Mammary epithelial cell (primary cell): ENCODE measurements at regions of chr3 and their contacts with region 1.

Region 1: GRCh38 chr3:66038726-66039589 is at the start of gene MAGI1:
- DNase-seq: peak; percentile 93
- H3K4me3 ChIP-seq: peak within 1 kb of the TSS; percentile 85 to 93 (median 86)
- H3K27ac ChIP-seq: peak within 1 kb of the TSS; percentile 75
- H3K4me1 ChIP-seq: peaks cover 29% of the 10 kb centered on the region
- H3K27me3 ChIP-seq: no peaks in the 10 kb centered on the region
- CTCF ChIP-seq: no peak
- total RNA-seq, gene MAGI1: 16.1 to 30.5 TPM

Region 2: DNA sequence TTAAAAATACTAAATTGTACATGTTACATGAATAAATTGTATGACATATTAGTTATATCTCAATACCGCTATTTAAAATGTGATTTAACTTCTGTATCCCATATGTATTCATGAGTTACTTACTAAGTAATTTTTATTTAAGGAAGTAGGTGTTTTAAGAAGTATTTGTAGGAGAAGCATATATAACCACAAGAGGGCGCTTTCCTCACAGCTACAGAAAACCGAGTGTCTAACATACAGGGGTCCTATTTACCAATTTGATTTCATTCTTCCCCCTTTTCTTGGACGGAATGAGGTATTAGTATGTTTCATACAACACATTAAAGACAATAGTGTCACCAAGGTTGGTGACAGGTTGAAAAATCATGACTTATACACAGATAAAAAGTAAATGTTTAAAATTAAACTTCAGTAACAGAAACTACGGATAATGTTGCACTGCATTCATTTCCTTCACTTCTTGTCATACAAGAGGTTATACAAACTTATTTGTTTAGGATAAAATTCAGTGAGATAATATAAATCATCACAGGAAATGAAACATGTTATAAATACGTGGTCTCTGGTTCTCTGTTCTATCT is 253.8 kb before region 1 on chr3:
- CTCF ChIA-PET with region 1: no interaction called
- dilution Hi-C with region 1: no loop called
- in situ Hi-C with region 1: no loop called
- intact Hi-C with region 1: loop called (anchors 2 kb)
- DNase-seq: peak; percentile 9
- H3K4me3 ChIP-seq: no peak overlapping the region
- H3K27ac ChIP-seq: no peak overlapping the region
- H3K4me1 ChIP-seq: no peaks in the 10 kb centered on the region
- H3K27me3 ChIP-seq: no peaks in the 10 kb centered on the region
- CTCF ChIP-seq: peak; percentile 57 to 69

Region 3: DNA sequence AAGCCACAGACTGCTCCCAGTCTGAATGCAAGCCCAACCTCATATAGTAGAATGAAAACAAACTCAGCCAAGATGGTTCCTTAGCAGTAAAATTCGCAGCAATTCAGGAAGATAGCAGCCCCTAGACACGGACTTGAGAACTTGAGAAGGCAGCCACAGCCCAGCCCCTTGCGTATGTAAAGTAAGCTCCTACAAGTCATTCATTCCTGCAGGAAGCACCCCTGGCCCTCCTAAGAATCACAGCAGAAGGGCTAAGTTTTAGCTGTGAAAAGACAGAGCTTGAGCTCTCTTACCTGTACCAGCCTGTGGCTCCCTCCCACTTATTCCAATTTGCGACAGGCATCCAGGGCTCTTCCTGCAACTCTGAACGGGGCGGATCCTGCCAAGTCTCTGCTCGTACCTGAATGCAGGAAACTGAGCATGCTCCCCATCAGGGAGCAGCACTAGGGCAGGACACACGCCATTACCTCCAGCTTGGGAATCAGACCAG is 136.6 kb before region 1 on chr3:
- CTCF ChIA-PET with region 1: no interaction called
- dilution Hi-C with region 1: no loop called
- in situ Hi-C with region 1: no loop called
- intact Hi-C with region 1: loop called (anchors 2 kb)
- DNase-seq: peak; percentile 80
- H3K4me3 ChIP-seq: peak overlapping the region; percentile 49 to 56 (median 56)
- H3K27ac ChIP-seq: peak overlapping the region; percentile 73
- H3K4me1 ChIP-seq: peaks cover 11% of the 10 kb centered on the region
- H3K27me3 ChIP-seq: no peaks in the 10 kb centered on the region
- CTCF ChIP-seq: no peak

Region 4: DNA sequence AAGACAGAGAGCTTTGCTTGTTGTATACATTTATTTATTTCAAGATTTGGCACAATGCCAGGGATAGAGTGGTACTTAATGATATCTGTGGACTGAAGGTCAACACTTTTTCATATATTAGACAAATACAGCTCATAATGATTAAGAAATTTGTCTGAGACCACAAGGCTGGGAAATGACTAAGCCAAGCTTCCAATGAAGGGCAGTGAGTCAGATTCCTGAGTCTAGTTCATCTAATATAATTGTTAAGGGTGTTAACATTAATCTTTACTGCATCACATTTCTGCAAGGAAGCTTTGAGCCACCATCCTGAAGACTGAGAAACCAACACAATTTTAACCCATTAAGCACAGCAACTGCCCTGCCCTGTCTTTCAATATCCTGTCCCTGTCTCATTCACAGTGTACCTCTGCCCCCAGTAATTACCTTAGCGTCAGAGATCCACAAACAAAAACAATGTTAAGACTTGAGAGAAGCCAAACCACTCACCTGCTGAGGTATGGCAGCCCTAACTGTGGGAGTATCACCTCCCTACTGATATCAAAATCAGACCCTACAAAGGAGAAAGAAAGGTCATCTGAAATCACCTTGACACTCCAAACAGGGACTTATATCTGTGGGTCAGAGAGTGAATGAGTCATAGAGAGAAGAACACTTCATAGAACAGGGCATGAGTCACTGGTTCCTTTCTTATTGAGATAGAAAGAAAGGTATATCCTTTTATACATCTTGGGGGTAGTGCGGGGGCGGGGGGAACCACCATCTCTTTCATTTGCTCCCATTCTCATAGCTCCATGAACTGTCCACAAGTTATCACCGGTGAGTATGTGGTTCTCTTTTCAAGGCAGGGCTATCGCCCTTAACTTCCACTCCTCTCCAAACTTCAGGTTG is 74.9 kb before region 1 on chr3:
- CTCF ChIA-PET with region 1: no interaction called
- dilution Hi-C with region 1: no loop called
- in situ Hi-C with region 1: no loop called
- intact Hi-C with region 1: loop called (anchors 2 kb)
- DNase-seq: peak; percentile 91
- H3K4me3 ChIP-seq: peak overlapping the region in 1 of 3 experiments; percentile 4
- H3K27ac ChIP-seq: peak overlapping the region; percentile 71
- H3K4me1 ChIP-seq: peaks cover 17% of the 10 kb centered on the region
- H3K27me3 ChIP-seq: no peaks in the 10 kb centered on the region
- CTCF ChIP-seq: no peak

Region 5: DNA sequence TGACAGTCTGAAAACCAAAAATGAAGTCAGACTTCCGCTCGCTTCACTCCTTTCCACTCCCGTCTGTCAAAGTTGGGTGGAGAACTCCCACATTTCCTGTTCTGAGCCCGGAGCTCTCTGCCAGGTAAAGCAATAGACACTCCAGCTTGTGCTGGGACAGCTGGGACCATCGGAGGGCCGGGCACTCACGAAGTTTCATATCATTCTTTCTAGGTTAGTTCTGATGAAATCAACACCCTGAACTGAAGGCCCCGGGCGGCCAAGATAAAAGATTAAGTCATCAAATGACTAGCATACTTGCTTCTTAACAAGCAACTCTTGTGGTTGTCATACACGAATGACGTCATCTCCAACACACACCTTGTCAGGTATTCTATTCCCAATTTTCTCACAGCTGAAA is 42.4 kb before region 1 on chr3:
- CTCF ChIA-PET with region 1: interaction called, 3 read pairs
- dilution Hi-C with region 1: no loop called
- in situ Hi-C with region 1: no loop called
- intact Hi-C with region 1: loop called (anchors 5 kb)
- DNase-seq: peak; percentile 93
- H3K4me3 ChIP-seq: peak overlapping the region in 1 of 3 experiments; percentile 12
- H3K27ac ChIP-seq: peak overlapping the region; percentile 35
- H3K4me1 ChIP-seq: peaks cover 32% of the 10 kb centered on the region
- H3K27me3 ChIP-seq: no peaks in the 10 kb centered on the region
- CTCF ChIP-seq: no peak

Region 6: DNA sequence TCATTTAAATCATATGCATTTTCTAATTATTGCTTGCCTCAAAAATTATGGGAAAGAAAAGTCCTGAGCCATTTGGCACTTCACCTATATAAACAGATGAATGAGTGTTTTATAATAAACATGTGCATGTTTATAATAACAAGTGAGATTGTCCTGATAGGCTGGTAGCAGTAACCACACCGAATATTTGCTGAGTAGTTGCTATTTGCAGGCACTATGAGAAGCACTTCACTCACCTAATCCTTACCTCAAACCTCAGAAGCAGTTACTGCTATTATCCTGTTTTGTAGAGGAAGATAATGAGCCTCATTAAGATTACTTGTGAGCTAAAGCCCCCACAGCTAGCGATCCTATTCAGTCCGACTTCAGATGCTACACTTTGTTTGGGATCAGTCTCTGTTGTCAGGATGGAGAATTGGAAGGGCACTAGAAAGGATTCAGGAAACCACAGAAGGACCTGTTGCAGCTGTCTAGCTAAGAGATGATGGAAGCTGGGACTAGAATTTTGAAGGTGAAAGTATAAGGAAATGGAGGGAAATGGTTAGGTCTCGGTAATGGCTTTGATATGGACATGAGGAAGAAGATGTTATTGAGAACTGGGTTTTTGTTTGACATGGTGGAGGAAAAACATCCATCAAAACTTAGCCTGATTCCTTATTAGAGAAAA is 28.1 kb after region 1 on chr3:
- CTCF ChIA-PET with region 1: no interaction called
- dilution Hi-C with region 1: no loop called
- in situ Hi-C with region 1: no loop called
- intact Hi-C with region 1: no loop called
- DNase-seq: no peak
- H3K4me3 ChIP-seq: no peak overlapping the region
- H3K27ac ChIP-seq: no peak overlapping the region
- H3K4me1 ChIP-seq: no peaks in the 10 kb centered on the region
- H3K27me3 ChIP-seq: no peaks in the 10 kb centered on the region
- CTCF ChIP-seq: no peak

Region 7: GRCh38 chr3:66138336-66139313 is 99.7 kb after region 1 on chr3:
- CTCF ChIA-PET with region 1: no interaction called
- dilution Hi-C with region 1: no loop called
- in situ Hi-C with region 1: no loop called
- intact Hi-C with region 1: loop called (anchors 1 kb)
- DNase-seq: peak; percentile 49
- H3K4me3 ChIP-seq: no peak overlapping the region
- H3K27ac ChIP-seq: no peak overlapping the region
- H3K4me1 ChIP-seq: peaks cover under 1% of the 10 kb centered on the region
- H3K27me3 ChIP-seq: no peaks in the 10 kb centered on the region
- CTCF ChIP-seq: peak; percentile 89 to 90